Activated CD4-positive, alpha-beta memory T cell treated with anti-CD3 and anti-CD28 coated beads for 36 hours (primary cell): ENCODE measurements at regions of chr2 and their contacts with region 1.

Region 1: GRCh38 chr2:7427293-7428060 is 510.3 kb downstream of the RNF144A start:
- DNase-seq: no peak
- H3K4me3 Mint-ChIP-seq: peak overlapping the region; percentile 35
- H3K27ac Mint-ChIP-seq: peak overlapping the region; percentile 68
- H3K4me1 Mint-ChIP-seq: peaks cover 38% of the 10 kb centered on the region
- H3K27me3 Mint-ChIP-seq: peaks cover 14% of the 10 kb centered on the region

Region 2: GRCh38 chr2:6934758-6935651 is 492.5 kb before region 1 on chr2:
- CTCF ChIA-PET with region 1: no interaction called
- POLR2A ChIA-PET with region 1: no interaction called
- intact Hi-C with region 1: no loop called
- DNase-seq: no peak
- H3K4me3 Mint-ChIP-seq: no peak overlapping the region
- H3K27ac Mint-ChIP-seq: no peak overlapping the region
- H3K4me1 Mint-ChIP-seq: peaks cover 41% of the 10 kb centered on the region
- H3K27me3 Mint-ChIP-seq: no peaks in the 10 kb centered on the region

Region 3: DNA sequence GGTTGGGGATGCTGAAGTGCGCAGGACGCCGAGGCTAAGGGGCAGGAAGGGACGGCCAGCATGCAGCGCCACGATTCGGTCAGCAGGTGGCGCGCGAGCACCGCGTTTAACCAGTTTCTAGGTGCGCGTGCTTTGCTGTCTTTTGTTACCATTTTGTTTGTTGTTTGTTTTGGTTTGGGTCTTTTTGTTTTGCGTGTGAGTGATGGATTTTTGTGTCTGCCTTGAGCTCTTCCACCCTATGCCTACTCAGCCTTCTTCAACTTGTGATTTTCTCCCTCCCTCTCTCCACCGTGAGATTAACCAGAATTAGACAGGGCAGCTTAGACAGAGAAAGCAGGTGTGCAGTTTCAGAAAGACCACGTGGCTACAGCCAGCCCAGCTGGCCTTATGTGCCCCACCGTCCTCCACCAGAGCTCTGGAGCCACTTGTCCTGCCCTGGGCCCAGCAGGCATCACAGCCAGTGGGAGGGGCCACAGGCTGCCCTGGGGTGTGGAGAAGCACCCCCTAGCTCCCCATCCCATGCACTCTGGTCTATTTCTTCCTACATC is 330.1 kb before region 1 on chr2:
- CTCF ChIA-PET with region 1: interaction called, 3 read pairs
- POLR2A ChIA-PET with region 1: no interaction called
- intact Hi-C with region 1: loop called (anchors 10 kb)
- DNase-seq: peak; percentile 82
- H3K4me3 Mint-ChIP-seq: no peak overlapping the region
- H3K27ac Mint-ChIP-seq: no peak overlapping the region
- H3K4me1 Mint-ChIP-seq: peaks cover 7% of the 10 kb centered on the region
- H3K27me3 Mint-ChIP-seq: no peaks in the 10 kb centered on the region

Region 4: DNA sequence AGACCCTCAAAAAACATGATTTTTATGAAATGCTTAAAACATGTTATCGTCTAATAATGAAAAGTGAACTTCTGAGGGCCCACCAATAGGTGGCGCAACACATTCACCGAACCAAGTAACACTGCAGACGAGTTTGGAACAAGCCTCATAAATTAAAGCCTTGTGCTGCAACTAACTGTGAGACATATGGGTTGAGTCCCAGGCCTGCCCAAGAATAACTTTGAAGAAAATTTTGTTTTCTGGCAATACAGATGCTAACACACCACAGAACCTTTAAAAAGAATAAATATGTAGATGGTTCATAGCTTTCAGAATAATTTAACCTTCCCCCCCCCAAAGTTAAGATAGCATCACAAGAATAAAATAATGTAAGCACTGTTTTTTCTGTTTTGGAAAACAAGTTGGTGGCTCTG is 224.4 kb before region 1 on chr2:
- CTCF ChIA-PET with region 1: no interaction called
- POLR2A ChIA-PET with region 1: no interaction called
- intact Hi-C with region 1: loop called (anchors 10 kb)
- DNase-seq: peak; percentile 69
- H3K4me3 Mint-ChIP-seq: no peak overlapping the region
- H3K27ac Mint-ChIP-seq: no peak overlapping the region
- H3K4me1 Mint-ChIP-seq: no peaks in the 10 kb centered on the region
- H3K27me3 Mint-ChIP-seq: no peaks in the 10 kb centered on the region

Region 5: GRCh38 chr2:7730449-7730848 is 303.0 kb after region 1 on chr2:
- CTCF ChIA-PET with region 1: interaction called, 12 read pairs
- POLR2A ChIA-PET with region 1: interaction called, 3 read pairs
- intact Hi-C with region 1: no loop called
- DNase-seq: peak; percentile 61
- H3K4me3 Mint-ChIP-seq: peak overlapping the region; percentile 80
- H3K27ac Mint-ChIP-seq: peak overlapping the region; percentile 89
- H3K4me1 Mint-ChIP-seq: peaks cover 53% of the 10 kb centered on the region
- H3K27me3 Mint-ChIP-seq: no peaks in the 10 kb centered on the region